Panc1 (cell line): ENCODE measurements at regions of chr11 and their contacts with region 1.

Region 1: DNA sequence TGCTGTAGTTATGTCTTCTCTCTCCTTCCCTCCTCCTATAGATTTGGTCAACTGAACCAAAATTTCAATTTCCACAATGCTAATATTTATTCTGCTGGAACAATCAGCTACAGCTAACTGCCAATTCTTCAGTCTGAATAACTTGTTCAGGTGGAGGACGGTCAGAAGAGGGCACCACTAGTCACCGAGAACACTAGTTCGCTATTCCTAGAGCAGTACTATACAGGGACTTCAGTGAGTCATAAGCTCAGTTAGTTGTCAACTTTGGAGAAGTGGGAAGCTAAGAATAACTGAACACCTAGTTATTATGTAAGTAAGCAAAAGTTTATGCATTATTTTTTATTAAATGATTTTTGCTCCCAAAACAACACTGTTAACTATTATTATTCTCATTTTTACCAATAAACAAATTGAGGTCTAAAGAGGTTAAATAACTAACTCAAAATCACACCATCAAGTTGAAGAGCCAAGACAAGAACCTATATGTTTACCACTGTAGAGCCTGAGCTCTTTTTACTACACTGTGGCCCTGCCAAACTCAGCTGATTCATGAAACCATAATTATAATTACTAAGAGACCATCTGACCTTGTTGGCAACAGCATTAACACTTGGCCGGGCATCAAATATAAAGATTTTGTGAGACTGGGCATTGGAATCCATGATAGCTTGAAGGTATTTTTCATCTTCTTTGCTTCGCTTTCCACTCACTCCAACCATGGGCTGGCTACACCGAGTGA is 59.0 kb downstream of the CEP57 start:
- DNase-seq: peak; percentile 39
- ATAC-seq: peak; percentile 90
- H3K4me3 ChIP-seq: no peak overlapping the region
- H3K27ac ChIP-seq: no peak overlapping the region
- H3K4me1 ChIP-seq: 0 out of 2 replicates have a peak, but pooled peaks cover 3% of the 10 kb centered on the region
- H3K27me3 ChIP-seq: no peaks in the 10 kb centered on the region
- CTCF ChIP-seq: peak; percentile 72

Region 2: DNA sequence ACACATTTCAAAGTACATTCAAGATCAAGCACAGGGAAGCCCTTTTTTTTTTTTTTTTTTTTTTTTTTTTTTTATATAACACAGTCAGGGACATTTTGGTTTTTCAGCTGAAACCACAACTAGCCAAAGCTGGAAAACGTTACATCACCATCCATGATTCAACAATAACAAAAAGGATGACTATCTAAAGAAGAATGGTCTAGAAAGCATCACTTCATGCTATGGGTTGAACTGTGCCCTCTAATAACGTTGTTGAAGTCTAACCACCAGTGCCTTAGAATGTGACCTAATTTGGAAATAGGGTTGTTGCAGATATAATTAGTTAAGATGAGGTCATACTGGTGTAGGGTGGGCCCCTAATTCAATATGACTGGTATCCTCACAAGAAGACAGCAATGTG is 28.0 kb after region 1 on chr11:
- CTCF ChIA-PET with region 1: no interaction called
- POLR2A ChIA-PET with region 1: no interaction called
- in situ Hi-C with region 1: no loop called
- intact Hi-C with region 1: no loop called
- DNase-seq: no peak
- ATAC-seq: no peak
- H3K4me3 ChIP-seq: no peak overlapping the region
- H3K27ac ChIP-seq: no peak overlapping the region
- H3K4me1 ChIP-seq: no peaks in the 10 kb centered on the region
- H3K27me3 ChIP-seq: no peaks in the 10 kb centered on the region
- CTCF ChIP-seq: no peak

Region 3: DNA sequence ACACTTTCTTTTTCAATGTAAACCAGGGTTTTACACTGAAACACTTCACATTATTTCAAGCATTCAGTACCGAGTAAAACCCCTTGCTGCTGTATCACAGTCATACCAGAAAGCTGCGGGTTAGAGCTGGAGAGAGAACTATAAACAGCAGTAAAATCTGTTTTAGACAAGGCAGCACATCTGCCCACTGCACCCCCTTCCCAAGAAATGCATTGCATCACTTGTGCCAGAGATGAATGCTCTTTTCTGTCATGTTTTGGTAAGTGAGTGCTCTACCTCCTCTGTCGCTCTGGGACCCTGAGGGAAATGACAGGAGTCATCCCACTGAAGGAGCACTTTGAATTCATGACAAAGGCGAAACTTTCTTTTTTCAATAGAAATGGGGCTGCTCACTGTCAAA is 386.5 kb after region 1 on chr11:
- CTCF ChIA-PET with region 1: no interaction called
- POLR2A ChIA-PET with region 1: no interaction called
- in situ Hi-C with region 1: no loop called
- intact Hi-C with region 1: loop called (anchors 10 kb)
- DNase-seq: no peak
- ATAC-seq: no peak
- H3K4me3 ChIP-seq: no peak overlapping the region
- H3K27ac ChIP-seq: no peak overlapping the region
- H3K4me1 ChIP-seq: peaks cover 6% of the 10 kb centered on the region; the same call in 1 of the 2 replicates
- H3K27me3 ChIP-seq: no peaks in the 10 kb centered on the region
- CTCF ChIP-seq: no peak